Mammary epithelial cell (primary cell): ENCODE measurements at regions of chr13 and their contacts with region 1.

Region 1: GRCh38 chr13:87671031-87671752 is at the start of gene SLITRK5:
- DNase-seq: peak; percentile 46
- H3K4me3 ChIP-seq: peak within 1 kb of the TSS; percentile 40 to 47 (median 40)
- H3K27ac ChIP-seq: no peak within 1 kb of the TSS
- H3K4me1 ChIP-seq: peaks cover 16% of the 10 kb centered on the region
- H3K27me3 ChIP-seq: peaks cover 33% of the 10 kb centered on the region
- CTCF ChIP-seq: peak; percentile 74 to 89
- total RNA-seq, gene SLITRK5: not detected

Region 2: DNA sequence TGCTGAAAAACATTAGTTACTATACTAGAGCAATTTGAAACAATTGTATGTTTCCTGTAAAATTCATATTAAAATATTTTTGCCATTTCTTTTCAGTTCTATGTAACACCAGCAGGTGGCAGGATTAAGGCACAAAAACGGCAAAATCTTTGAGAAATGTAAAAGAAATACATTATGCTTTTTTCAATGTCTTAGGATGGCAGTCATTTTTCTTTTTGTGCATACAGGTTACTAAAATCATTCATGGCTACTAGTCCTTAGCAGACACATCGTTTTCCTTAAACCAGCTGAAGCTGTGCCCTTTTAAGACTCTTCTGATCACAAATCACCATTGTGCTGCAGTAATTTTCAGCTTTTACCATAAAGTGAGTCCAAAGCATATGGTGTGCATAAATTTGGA is 800.7 kb before region 1 on chr13:
- CTCF ChIA-PET with region 1: no interaction called
- dilution Hi-C with region 1: no loop called
- in situ Hi-C with region 1: no loop called
- intact Hi-C with region 1: loop called (anchors 10 kb)
- DNase-seq: no peak
- H3K4me3 ChIP-seq: no peak overlapping the region
- H3K27ac ChIP-seq: no peak overlapping the region
- H3K4me1 ChIP-seq: no peaks in the 10 kb centered on the region
- H3K27me3 ChIP-seq: no peaks in the 10 kb centered on the region
- CTCF ChIP-seq: peak; percentile 55 to 61

Region 3: GRCh38 chr13:87259551-87259954 is 411.6 kb before region 1 on chr13:
- CTCF ChIA-PET with region 1: no interaction called
- dilution Hi-C with region 1: no loop called
- in situ Hi-C with region 1: no loop called
- intact Hi-C with region 1: loop called (anchors 1 kb)
- DNase-seq: no peak
- H3K4me3 ChIP-seq: no peak overlapping the region
- H3K27ac ChIP-seq: no peak overlapping the region
- H3K4me1 ChIP-seq: no peaks in the 10 kb centered on the region
- H3K27me3 ChIP-seq: no peaks in the 10 kb centered on the region
- CTCF ChIP-seq: peak; percentile 29 to 59

Region 4: DNA sequence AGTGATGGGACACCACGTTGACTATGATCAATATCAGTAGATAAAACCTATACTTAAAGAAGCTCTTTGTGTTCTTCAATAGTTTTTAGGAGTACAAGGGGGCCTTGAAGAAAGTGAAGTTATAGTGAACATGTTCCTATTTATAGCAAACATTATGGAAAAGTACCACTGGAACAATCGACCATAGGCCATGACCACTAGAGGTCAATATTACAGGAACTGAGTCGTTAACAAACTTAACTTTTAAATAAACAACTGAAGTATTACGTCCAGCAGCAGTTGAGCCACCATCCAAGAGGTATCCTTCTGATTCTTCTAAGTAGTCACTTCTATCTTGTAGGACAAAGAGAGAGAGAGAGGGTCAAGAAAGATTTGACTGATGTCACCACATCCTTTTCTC is 391.1 kb before region 1 on chr13:
- CTCF ChIA-PET with region 1: no interaction called
- dilution Hi-C with region 1: no loop called
- in situ Hi-C with region 1: no loop called
- intact Hi-C with region 1: loop called (anchors 1 kb)
- DNase-seq: no peak
- H3K4me3 ChIP-seq: no peak overlapping the region
- H3K27ac ChIP-seq: no peak overlapping the region
- H3K4me1 ChIP-seq: no peaks in the 10 kb centered on the region
- H3K27me3 ChIP-seq: no peaks in the 10 kb centered on the region
- CTCF ChIP-seq: peak; percentile 6 to 15